Ascending aorta (tissue), 2 donors: ENCODE measurements at regions of chr1 and their contacts with region 1.

Region 1: DNA sequence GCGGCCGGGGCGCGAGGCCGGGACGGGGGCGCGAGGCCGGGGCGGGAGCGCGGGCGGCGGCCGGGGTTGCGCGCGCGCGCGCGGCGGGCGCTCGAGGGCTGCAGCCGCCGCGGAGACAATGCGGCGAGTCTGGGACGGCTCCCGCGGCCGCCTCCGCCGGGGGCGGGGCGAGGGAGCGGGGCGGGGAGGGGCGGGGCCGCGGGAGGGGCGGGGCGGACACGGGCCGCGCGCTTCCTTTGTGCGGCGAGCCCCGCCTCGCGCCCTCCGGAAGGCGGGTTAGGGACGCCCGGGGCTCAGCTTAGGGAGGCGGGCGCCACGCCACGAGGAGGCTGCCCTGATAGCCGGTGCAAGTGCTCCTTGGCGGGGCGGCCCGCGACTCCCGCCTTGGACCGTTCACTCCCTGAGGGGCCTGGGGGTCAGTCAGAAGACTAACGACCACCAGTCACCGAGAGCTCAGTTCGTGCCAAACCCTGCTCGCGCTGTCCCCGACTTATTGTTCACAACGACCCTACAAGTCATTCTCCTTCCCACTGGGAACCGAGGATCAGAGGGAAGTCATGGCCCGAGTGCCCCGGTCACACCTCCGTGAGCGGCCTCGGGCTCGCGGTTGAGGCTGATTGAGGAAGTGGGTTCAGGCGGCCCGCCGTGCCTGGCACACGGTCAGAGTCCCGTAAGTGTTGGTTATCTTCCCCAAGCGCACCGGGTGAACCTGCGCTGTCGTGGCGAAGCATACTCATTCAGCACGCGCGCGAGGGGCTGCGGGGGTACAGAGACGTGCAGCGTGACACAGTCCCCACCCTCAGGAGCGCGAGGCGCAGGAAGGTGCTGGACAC is 29.1 kb upstream of the A3GALT2 start:
- DNase-seq: peak in 1 of 2 donors; percentile 93
- H3K4me3 ChIP-seq: peak overlapping the region; percentile 71 to 99
- H3K27ac ChIP-seq: peak overlapping the region; percentile 81 to 85
- H3K4me1 ChIP-seq: peaks cover 6 to 23% of the 10 kb centered on the region in 2 donors
- H3K27me3 ChIP-seq: no peaks in the 10 kb centered on the region
- CTCF ChIP-seq: no peak

Region 2: GRCh38 chr1:33181921-33182341 is 168.1 kb before region 1 on chr1 and contains the start of gene TRIM62:
- intact Hi-C with region 1: loop called (anchors 5 kb)
- DNase-seq: peak; percentile 27 to 92
- H3K4me3 ChIP-seq: peak within 1 kb of the TSS; percentile 79 to 87
- H3K27ac ChIP-seq: peak within 1 kb of the TSS; percentile 82 to 92
- H3K4me1 ChIP-seq: peaks cover 0 to 12% of the 10 kb centered on the region in 2 donors
- H3K27me3 ChIP-seq: no peaks in the 10 kb centered on the region
- CTCF ChIP-seq: no peak
- total RNA-seq, gene TRIM62: 18.1 TPM

Region 3: GRCh38 chr1:33332357-33332789 is 17.6 kb before region 1 on chr1:
- intact Hi-C with region 1: loop called (anchors 1 kb)
- DNase-seq: peak in 1 of 2 donors; percentile 66
- H3K4me3 ChIP-seq: no peak overlapping the region
- H3K27ac ChIP-seq: peak overlapping the region; percentile 80
- H3K4me1 ChIP-seq: peaks cover 36 to 70% of the 10 kb centered on the region in 2 donors
- H3K27me3 ChIP-seq: no peaks in the 10 kb centered on the region
- CTCF ChIP-seq: no peak

Region 4: DNA sequence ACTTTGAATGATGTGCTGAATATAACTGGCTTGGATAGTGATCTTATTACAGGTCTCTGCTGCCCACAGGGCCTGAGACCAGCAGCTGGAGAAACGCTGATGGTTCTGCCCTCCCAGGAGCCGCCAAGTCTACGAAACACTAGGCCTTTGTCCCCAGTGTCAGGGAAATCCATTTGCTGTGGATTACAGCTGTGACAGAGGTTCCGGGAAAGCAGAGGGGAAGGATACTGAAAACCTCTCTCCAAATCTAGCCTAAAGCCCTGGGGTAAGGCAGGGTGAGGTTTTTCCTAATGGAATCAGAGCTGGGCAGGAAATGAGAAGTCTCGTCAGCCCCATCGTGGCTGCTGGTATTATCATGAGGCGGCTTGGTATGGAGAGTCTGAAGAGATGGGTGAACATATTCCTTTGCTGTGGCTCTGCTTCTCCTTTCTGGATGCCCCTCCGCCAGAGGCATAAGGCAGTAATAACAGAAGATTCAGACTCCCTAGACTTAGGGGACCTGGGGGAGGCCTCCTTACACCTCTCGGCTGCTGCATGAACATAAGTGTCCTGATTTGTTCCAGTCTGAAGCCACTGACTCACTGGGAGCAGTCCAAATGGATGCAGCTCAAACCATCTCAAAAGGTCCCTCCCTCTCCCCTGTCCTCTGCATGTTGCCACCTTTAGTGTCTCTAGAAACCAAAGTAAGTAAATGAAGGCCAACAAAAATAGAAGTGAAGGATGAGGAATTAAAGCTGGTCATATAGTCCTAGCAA is 32.8 kb after region 1 on chr1:
- intact Hi-C with region 1: no loop called
- DNase-seq: peak in 1 of 2 donors; percentile 59
- H3K4me3 ChIP-seq: no peak overlapping the region
- H3K27ac ChIP-seq: no peak overlapping the region
- H3K4me1 ChIP-seq: peaks cover 0 to 6% of the 10 kb centered on the region in 2 donors
- H3K27me3 ChIP-seq: no peaks in the 10 kb centered on the region
- CTCF ChIP-seq: no peak